Activated CD4-positive, alpha-beta T cell treated with anti-CD3 and anti-CD28 coated beads for 36 hours (primary cell): ENCODE measurements at regions of chr17 and their contacts with region 1.

Region 1: DNA sequence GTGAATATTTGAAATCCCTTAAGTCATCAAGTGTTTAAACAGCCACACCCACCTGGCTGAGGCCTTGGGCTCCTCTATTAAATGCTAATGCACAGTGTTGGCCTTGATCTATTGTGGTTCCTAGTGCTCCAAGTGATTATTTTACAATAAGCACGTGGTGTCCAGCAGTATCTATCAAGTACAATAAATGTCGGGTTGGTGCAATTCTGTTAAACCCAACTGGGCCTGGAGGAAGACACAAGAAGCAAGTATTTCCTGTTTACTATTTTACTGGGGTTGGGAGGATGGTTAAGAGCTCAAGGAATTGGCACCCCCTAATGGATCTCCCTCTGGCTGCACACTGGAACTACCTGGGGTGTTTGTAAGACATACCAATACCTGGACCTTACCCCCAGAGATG is 72.1 kb upstream of the HNF1B start:
- DNase-seq: no peak
- ATAC-seq: no peak
- H3K4me3 Mint-ChIP-seq: no peak overlapping the region
- H3K27ac Mint-ChIP-seq: no peak overlapping the region
- H3K4me1 Mint-ChIP-seq: no peaks in the 10 kb centered on the region
- H3K27me3 Mint-ChIP-seq: peaks cover 16% of the 10 kb centered on the region

Region 2: DNA sequence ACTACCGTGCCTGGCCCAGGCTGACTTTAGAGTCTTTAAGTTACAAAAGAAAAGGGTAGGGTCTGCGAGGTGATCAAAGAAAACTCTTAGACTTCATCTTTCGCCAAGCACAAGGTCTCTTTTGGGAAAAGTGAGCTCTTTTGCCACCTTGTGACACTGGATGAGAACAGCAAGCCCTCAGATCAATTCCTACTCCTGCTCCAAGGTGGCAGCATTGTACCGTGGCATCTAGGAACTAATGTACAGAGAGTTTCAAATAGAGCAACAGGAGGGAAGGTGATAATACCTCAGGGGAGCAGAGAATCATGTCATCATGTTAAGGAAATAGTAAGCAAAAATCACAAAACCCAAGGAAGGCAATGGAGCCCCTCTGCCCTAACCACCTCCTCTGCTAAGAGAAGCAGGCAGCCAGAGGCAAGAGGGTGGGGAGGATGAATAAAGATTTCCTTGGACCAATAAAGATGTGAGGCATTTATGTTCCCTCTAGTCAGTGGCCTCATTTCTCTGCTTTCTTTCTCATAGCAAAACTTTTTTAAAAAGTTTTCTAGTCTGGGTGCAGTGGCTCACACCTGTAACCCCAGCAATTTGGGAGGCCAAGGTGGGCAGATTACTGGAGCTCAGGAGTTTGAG is 443.3 kb before region 1 on chr17:
- CTCF ChIA-PET with region 1: interaction called, 5 read pairs
- POLR2A ChIA-PET with region 1: no interaction called
- intact Hi-C with region 1: loop called in 1 of 2 experiments (anchors 2 kb)
- DNase-seq: peak; percentile 82
- ATAC-seq: peak; percentile 98
- H3K4me3 Mint-ChIP-seq: no peak overlapping the region
- H3K27ac Mint-ChIP-seq: no peak overlapping the region
- H3K4me1 Mint-ChIP-seq: peaks cover 5% of the 10 kb centered on the region
- H3K27me3 Mint-ChIP-seq: no peaks in the 10 kb centered on the region

Region 3: DNA sequence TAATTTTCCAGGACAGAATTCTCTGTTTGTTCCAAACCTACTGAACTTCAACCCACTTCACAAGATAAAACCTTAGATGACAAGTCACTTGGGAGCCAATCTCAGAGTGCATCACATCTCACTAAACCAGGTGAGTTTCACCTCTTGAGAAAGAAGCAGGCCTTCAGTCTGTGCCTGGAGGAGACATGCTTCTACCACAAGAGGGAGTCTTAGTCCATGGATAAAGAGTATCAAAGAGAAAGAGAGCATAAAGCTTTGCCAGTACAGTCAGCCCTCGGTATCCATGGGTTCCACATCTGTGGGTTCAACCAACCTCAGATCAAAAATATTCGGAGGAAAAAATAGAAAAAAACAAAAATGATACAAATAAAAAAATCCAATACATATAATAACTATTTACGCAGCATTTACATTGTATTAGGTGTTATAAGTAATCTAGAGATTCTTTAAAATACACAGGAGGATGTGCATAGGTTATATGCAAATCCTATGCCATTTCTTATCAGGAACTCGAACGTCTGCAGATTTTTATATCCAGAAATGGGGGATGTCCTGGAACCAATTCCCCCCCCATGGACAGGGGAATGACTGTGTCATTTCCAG is 289.6 kb before region 1 on chr17:
- CTCF ChIA-PET with region 1: interaction called, 6 read pairs
- POLR2A ChIA-PET with region 1: no interaction called
- intact Hi-C with region 1: loop called in 1 of 2 experiments (anchors 1 kb)
- DNase-seq: peak; percentile 25
- ATAC-seq: peak; percentile 86
- H3K4me3 Mint-ChIP-seq: no peak overlapping the region
- H3K27ac Mint-ChIP-seq: no peak overlapping the region
- H3K4me1 Mint-ChIP-seq: peaks cover 7% of the 10 kb centered on the region
- H3K27me3 Mint-ChIP-seq: no peaks in the 10 kb centered on the region